BJ (cell line): ENCODE measurements at regions of chr15 and their contacts with region 1.

Region 1: GRCh38 chr15:40323239-40323952 is at the start of gene INAFM2:
- DNase-seq: peak; percentile 62
- H3K4me3 ChIP-seq: peak within 1 kb of the TSS; percentile 72
- H3K27me3 ChIP-seq: no peaks in the 10 kb centered on the region; the same call in 1 of the 2 replicates
- CTCF ChIP-seq: peak; percentile 64
- polyA plus RNA-seq, gene INAFM2: 7.3 and 12.8 TPM in 2 replicates

Region 2: DNA sequence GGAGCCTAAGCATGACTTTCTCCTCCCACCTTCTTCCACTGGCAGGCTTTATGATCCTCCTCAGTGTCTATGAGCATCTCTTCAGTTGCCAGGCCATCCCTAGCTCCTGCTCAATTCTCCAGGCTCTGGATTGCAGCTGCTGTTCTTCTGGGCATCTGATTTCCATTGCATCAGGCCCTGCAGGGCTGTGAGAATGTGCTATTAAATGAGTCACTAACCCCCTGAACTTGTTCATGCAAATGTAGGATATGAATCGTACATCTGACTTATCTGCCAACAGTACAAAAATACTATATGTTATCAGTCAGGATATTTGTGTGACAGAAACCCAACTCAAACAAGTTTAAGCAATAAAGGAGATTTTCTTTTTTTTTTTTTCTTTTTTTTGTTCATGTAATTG is 415.2 kb before region 1 on chr15:
- CTCF ChIA-PET with region 1: no interaction called
- POLR2A ChIA-PET with region 1: no interaction called
- DNase-seq: peak; percentile 81
- H3K4me3 ChIP-seq: no peak overlapping the region
- H3K27me3 ChIP-seq: no peaks in the 10 kb centered on the region
- CTCF ChIP-seq: no peak

Region 3: GRCh38 chr15:40307421-40308211 is 15.8 kb before region 1 on chr15 and contains the start of gene PLCB2:
- CTCF ChIA-PET with region 1: interaction called, 53 read pairs
- POLR2A ChIA-PET with region 1: no interaction called
- DNase-seq: no peak
- H3K4me3 ChIP-seq: no peak within 1 kb of the TSS
- H3K27me3 ChIP-seq: peaks cover 25% of the 10 kb centered on the region
- CTCF ChIP-seq: 0 out of 2 replicates have a peak, but pooled peaks have one; percentile 27
- polyA plus RNA-seq, gene PLCB2: 0.22 and 0.47 TPM in 2 replicates

Region 4: DNA sequence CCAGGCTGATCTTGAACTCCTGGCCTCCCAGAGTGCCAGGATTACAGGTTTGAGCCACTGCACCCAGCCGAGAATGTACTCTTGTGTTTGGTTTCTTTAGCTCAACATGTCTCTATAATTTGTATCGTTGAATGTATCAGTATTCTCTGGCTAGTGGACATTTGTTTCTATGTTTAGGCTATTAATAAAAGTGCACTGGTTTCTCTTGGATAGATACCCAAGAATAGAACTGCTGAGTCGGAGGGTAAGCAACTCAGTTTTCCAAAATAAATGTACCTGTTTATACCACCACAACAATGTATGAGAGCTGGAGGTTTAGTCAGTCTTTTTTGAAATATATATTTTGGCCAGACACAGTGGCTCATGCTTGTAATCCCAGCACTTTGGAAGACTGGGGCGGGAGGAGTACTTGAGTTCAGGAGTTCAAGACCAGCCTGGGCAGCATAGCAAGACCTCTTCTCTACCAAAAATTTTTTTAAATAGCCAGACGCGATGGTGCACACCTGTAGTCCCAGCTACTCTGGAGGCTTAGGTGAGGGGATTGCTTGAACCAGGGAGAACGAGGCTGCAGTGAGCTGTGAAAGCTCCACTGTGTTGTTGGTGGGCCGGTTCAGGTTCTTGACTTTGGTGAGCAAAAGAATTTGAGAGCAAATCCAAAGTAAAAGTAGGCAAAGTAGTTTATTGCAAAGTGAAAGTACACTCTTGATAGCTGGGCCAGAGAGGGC is 74.5 kb after region 1 on chr15:
- CTCF ChIA-PET with region 1: no interaction called
- POLR2A ChIA-PET with region 1: interaction called, 23 read pairs
- DNase-seq: no peak
- H3K4me3 ChIP-seq: no peak overlapping the region
- H3K27me3 ChIP-seq: no peaks in the 10 kb centered on the region
- CTCF ChIP-seq: no peak

Region 5: DNA sequence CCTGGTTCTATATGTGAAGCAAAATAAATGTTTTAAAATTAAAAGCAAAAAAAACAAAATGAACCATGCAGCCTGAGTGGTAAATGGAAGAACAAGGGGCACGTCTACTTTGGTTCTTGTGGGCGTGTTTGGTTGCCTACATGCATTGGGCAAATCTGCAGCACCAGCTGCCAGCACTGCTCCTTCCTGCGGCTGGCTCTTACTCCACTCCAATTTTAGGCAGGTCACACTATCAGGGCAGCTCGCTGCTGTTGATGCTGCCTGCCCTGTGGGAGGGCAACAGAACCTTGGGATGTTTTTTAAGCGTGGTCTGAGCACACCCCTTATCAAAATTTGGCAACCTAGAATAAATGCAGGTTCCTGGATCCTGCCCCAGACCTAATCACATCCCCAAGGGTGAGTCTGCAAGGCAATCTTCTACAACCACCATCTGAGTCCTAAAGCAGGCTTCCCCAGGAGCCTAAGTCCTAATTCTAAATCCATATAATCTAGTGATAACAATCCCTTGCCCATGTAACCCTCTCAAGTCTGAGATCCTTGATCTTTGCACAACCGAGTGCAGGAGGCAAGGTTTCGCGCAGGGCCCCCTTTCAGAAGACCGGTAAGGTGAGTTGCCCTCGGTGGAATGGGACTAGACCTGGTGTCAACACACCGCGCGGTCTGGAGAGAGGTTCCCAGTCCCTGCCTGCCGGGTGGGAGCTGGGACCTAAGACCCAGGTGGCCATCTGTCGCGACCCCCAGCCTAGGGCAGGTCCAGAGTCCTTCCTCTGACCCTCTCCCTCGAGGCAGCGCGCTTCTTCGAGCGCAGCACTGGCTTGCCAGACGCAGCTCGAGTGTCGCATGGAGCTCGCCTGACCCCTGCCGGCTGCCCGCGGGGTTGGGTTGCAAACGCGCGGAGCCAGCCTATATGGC is 98.1 kb after region 1 on chr15:
- CTCF ChIA-PET with region 1: interaction called, 31 read pairs
- POLR2A ChIA-PET with region 1: no interaction called
- DNase-seq: no peak
- H3K4me3 ChIP-seq: no peak overlapping the region
- H3K27me3 ChIP-seq: no peaks in the 10 kb centered on the region
- CTCF ChIP-seq: peak; percentile 99